ENCODE measurements at regions of chr6 and their contacts with region 1.

Region 1: DNA sequence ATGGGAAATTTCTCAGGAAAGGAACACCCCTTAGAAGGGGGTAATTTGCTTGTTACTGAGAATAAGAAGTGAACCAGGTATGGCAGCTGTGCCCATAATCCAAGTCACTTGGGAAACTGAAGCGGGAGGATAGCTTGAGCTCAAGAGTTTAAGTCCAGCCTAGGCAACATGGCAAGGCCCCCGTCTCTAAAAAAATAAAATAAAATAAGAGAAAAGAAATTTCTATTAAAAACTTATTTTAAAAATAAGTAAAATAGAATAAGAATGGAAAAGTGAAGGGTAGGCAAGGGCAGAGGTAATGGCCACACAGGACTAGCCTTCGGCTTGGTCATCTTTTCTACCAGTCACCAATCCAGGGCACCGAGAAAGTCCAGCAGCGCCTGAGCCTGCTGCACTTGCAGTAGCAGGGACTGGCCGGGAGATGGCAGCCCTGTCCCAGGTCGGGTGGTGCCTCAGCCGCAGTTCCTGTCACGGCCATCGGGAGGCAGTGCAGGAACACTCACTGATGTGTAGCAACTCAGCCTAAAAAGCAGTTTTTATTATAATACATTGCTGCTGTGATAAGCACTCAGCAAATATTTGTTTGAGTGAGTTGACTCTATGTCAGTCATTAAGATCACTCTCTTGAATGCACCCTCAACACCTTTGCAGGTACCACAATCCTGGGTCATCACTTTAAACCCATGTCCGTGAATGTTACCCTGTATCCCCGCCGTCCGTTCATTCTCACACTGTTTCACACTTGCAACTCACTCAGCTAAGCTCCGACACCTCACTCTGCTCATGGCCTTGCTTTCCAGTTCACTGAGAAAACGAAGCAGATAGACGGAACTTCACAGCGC is 23.2 kb upstream of the GCM1 start:
- DNase-seq: peak; percentile 85 to 95 (median 95)
- ATAC-seq: peak; percentile 94
- H3K4me3 ChIP-seq: no peak overlapping the region
- H3K27ac ChIP-seq: no peak overlapping the region
- H3K4me1 ChIP-seq: no peaks in the 10 kb centered on the region
- H3K27me3 ChIP-seq: no peaks in the 10 kb centered on the region

Region 2: GRCh38 chr6:53294095-53294494 is 122.3 kb after region 1 on chr6:
- intact Hi-C with region 1: loop called in 2 of 4 experiments (anchors 10 kb)
- DNase-seq: no peak
- ATAC-seq: no peak
- H3K4me3 ChIP-seq: no peak overlapping the region
- H3K27ac ChIP-seq: no peak overlapping the region
- H3K4me1 ChIP-seq: peaks cover 6% of the 10 kb centered on the region
- H3K27me3 ChIP-seq: no peaks in the 10 kb centered on the region

Region 3: GRCh38 chr6:53410508-53411258 is 238.9 kb after region 1 on chr6:
- intact Hi-C with region 1: loop called (anchors 2 to 10 kb)
- DNase-seq: peak; percentile 25 to 81 (median 69)
- ATAC-seq: peak; percentile 91 to 93
- H3K4me3 ChIP-seq: no peak overlapping the region
- H3K27ac ChIP-seq: no peak overlapping the region
- H3K4me1 ChIP-seq: no peaks in the 10 kb centered on the region
- H3K27me3 ChIP-seq: no peaks in the 10 kb centered on the region